Activated CD4-positive, alpha-beta T cell treated with anti-CD3 and anti-CD28 coated beads, Interleukin-2, amount 10 ng/mL, durations not matched to agents 24 days and 14 days (primary cell): ENCODE measurements at regions of chr22 and their contacts with region 1.

Region 1: DNA sequence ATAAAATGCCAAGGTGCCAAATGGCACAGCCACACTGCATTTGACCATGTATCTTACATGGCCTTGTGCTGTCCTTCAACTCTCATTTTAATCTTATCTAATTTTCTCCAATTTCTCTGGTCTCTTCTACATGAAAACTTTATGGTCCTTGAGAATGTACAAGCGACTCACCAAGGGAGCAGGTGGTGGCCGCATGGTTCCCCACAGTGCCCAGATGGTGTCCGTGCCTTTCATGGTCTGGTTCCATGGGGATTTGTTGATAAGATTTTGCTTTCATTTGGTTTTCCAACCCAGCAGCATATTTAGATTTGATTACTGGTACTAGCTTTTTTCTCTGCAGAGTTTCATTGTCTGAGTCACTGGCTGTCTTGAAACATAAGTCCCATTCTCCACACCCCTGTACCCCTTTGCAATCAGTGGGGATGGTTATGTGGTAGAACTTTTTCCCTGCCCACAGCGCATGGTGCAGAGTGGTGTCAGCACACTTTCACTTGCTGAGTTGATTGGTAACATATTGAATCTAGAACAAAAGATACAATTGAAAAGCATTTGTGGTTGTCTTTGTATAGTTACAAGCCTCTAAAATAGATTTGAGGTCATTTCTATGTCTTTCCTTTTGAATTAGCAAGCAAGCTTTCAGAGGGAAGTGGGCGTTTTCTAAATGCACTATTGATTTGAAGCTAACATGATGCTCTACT is 24.1 kb downstream of the ZNRF3 start:
- DNase-seq: peak; percentile 64
- H3K4me3 Mint-ChIP-seq: peak overlapping the region; percentile 43
- H3K27ac Mint-ChIP-seq: peak overlapping the region; percentile 62
- H3K4me1 Mint-ChIP-seq: peaks cover 22% of the 10 kb centered on the region
- H3K27me3 Mint-ChIP-seq: peaks cover 65% of the 10 kb centered on the region

Region 2: DNA sequence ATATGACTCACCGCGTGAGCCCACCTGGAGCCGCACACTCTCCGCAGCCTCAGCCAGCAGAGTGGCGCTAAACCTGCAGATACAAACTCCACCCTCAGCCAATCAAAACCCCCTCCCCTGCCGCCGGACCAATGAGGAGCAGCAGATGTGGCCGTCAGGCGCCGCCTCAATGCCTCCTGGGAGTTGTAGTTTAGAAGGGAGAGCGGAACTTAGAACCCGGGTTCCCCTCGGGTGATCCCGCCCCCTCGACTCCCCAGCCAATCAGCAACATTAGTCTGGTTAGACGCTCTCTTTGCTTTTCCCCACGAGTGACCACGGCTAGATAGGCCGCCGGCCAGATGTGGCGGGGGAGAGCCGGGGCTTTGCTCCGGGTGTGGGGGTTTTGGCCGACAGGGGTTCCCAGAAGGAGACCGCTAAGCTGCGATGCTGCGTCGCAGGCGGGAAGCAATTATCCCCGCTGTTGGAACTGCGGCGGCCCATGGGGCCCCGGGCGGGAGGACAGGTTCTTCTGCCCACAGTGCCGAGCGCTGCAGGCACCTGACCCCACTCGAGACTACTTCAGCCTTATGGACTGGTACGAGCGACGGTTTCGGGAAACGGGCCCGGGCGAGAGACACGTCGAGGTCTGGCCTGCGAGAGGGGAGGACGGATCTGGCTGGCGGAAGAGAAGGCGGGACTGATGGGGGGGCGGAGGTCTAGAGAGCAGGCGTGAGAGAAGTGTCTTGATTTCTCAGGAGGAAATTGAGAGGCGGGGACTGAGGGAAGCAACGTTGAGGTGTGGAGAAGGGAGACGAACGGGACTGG is 165.5 kb before region 1 on chr22 and contains the starts of genes CHEK2 and HSCB:
- intact Hi-C with region 1: loop called (anchors 1 kb)
- DNase-seq: peak; percentile 99
- H3K4me3 Mint-ChIP-seq: peak within 1 kb of the TSS; percentile 92
- H3K27ac Mint-ChIP-seq: peak within 1 kb of the TSS; percentile 86
- H3K4me1 Mint-ChIP-seq: peaks cover 25% of the 10 kb centered on the region
- H3K27me3 Mint-ChIP-seq: no peaks in the 10 kb centered on the region
- total RNA-seq, gene CHEK2: 29.8 and 32.7 TPM in 2 replicates
- total RNA-seq, gene HSCB: 12.8 and 14.1 TPM in 2 replicates

Region 3: DNA sequence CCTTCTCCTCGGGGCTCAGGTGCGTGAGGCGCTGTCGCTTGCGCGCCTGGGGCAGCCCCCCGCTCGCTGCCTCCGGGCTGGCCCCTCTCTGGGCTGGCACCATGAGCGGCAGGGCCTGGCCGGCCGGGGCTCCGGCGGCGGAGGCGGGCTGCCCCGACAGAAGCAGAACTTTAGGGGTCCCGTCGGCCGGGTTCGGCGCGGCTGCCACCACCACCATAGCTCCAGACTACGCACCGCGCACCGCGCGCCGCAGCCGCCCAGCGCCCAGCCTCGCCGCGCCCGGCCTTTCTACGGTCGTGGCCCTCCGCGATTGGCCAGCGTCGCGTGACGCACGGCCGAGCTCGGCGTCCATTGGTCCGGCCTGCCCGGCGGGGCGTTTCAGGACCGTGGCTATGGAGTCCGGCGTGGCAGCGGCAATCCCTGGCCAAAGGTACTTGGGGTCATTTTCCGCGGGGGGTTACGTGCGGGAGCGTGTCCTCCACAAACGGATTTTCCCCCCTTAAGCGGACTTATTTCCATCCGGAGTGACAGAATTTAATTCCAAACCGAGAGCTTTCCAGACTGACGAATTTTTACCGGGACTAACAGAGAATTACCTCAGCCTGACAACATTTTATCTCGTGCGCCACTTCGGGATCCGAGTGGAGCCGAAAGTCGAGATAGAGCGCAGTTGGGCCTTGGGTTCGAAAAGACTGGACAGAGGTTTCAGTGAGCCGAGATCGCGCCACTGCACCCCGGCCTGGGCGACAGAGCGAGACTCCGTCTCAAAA is 107.0 kb before region 1 on chr22 and contains the start of gene XBP1:
- intact Hi-C with region 1: loop called (anchors 1 kb)
- DNase-seq: peak; percentile 98
- H3K4me3 Mint-ChIP-seq: peak within 1 kb of the TSS; percentile 89
- H3K27ac Mint-ChIP-seq: peak within 1 kb of the TSS; percentile 95
- H3K4me1 Mint-ChIP-seq: peaks cover 41% of the 10 kb centered on the region
- H3K27me3 Mint-ChIP-seq: no peaks in the 10 kb centered on the region
- total RNA-seq, gene XBP1: 133 and 135 TPM in 2 replicates

Region 4: GRCh38 chr22:28882878-28883656 is 24.4 kb before region 1 on chr22 and contains the start of gene ZNRF3:
- intact Hi-C with region 1: loop called (anchors 1 kb)
- DNase-seq: peak; percentile 94
- H3K4me3 Mint-ChIP-seq: peak within 1 kb of the TSS; percentile 80
- H3K27ac Mint-ChIP-seq: peak within 1 kb of the TSS; percentile 66
- H3K4me1 Mint-ChIP-seq: peaks cover 8% of the 10 kb centered on the region
- H3K27me3 Mint-ChIP-seq: peaks cover 65% of the 10 kb centered on the region
- total RNA-seq, gene ZNRF3: 2.0 and 2.3 TPM in 2 replicates